PC-3 (cell line): ENCODE measurements at regions of chr3 and their contacts with region 1.

Region 1: GRCh38 chr3:57298041-57298440 is 5.6 kb upstream of the ASB14 start:
- DNase-seq: peak; percentile 88
- ATAC-seq: peak; percentile 100
- H3K4me3 ChIP-seq: no peak overlapping the region
- H3K27ac ChIP-seq: no peak overlapping the region
- H3K4me1 ChIP-seq: peaks cover 11% of the 10 kb centered on the region
- H3K27me3 ChIP-seq: no peaks in the 10 kb centered on the region
- CTCF ChIP-seq: peak; percentile 34; the same call in 1 of the 2 replicates

Region 2: DNA sequence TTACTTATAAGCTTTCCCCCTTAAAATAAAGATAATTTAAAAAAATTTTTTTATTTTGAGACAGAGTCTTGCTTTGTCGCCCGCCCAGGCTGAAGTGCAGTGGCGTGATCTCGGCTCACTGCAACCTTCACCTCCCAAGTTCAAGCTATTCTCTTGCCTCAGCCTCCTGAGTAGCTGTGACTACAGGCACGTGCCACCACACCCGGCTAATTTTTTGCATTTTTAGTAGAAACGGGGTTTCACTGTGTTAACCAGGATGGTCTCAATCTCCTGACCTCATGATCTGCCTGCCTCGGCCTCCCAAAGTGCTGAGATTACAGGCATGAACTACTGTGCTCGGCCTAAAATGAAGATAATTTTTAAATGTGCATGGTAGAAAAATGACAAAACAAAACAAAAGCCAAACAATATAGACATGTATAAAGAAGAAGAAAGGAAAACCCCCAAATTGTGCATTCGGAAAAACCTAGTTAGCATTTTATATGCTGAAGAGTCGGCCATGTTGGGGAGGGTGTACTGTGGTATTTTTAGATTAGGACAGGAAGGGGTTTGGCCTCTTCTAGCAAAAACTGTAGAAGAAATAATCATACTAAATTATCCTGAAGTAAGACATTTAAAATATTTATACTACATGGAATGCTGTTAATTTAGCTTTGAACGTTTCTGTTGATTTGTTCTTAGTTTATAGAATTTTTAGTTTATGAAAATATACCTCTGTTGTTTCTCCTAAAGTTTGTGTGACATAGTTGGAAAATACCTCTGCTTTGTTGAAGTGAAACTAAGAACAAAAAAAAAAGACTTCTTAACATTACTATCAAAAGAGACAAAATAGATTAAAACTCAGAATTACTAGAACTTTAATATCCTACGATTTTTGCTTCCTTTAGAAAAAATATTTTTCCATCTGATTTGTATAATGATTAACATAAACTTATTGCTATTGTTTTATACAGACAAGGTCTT is 63.1 kb before region 1 on chr3:
- CTCF ChIA-PET with region 1: no interaction called
- POLR2A ChIA-PET with region 1: no interaction called
- intact Hi-C with region 1: loop called (anchors 5 kb)
- DNase-seq: no peak
- ATAC-seq: no peak
- H3K4me3 ChIP-seq: no peak overlapping the region
- H3K27ac ChIP-seq: no peak overlapping the region
- H3K4me1 ChIP-seq: peaks cover 7% of the 10 kb centered on the region
- H3K27me3 ChIP-seq: no peaks in the 10 kb centered on the region
- CTCF ChIP-seq: no peak

Region 3: GRCh38 chr3:57287205-57287604 is 10.8 kb before region 1 on chr3:
- CTCF ChIA-PET with region 1: no interaction called
- POLR2A ChIA-PET with region 1: interaction called, 10 read pairs
- intact Hi-C with region 1: no loop called
- DNase-seq: no peak
- ATAC-seq: peak; percentile 22; the same call in 1 of the 2 replicates
- H3K4me3 ChIP-seq: no peak overlapping the region
- H3K27ac ChIP-seq: no peak overlapping the region
- H3K4me1 ChIP-seq: no peaks in the 10 kb centered on the region
- H3K27me3 ChIP-seq: no peaks in the 10 kb centered on the region
- CTCF ChIP-seq: no peak

Region 4: GRCh38 chr3:57331078-57331610 is 33.1 kb after region 1 on chr3:
- CTCF ChIA-PET with region 1: interaction called, 13 read pairs
- POLR2A ChIA-PET with region 1: no interaction called
- intact Hi-C with region 1: no loop called
- DNase-seq: no peak
- ATAC-seq: 0 out of 2 replicates have a peak, but pooled peaks have one; percentile 45
- H3K4me3 ChIP-seq: no peak overlapping the region
- H3K27ac ChIP-seq: no peak overlapping the region
- H3K4me1 ChIP-seq: no peaks in the 10 kb centered on the region
- H3K27me3 ChIP-seq: peaks cover 14% of the 10 kb centered on the region; the same call in 1 of the 2 replicates
- CTCF ChIP-seq: peak; percentile 33; the same call in 1 of the 2 replicates

Region 5: DNA sequence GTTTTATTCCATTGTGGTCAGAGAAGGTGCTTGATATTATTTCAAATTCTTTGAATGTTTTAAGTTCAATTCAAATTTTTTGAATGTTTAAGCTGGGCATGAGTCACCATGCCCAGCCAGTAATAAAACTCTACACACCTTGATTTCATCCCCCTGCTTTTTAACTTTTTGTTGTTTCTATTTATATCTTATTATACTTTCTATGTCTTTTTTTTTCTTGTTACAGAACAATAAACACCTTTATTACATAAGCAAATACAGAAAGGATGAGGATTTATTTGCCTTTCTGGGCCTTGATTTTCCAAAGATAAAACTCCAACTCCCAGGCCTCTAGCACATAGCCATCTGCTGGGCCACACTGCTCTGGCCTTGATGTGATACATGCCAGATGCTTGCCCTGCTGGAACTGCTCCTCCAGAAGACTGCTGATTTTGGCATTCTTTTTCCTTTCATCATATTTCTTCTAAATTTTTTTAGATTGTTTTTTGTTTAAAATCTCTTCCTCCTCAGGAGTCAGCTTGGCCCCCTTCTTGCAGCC is 232.1 kb after region 1 on chr3:
- CTCF ChIA-PET with region 1: no interaction called
- POLR2A ChIA-PET with region 1: no interaction called
- intact Hi-C with region 1: no loop called
- DNase-seq: peak; percentile 59
- ATAC-seq: peak; percentile 97
- H3K4me3 ChIP-seq: no peak overlapping the region
- H3K27ac ChIP-seq: peak overlapping the region; percentile 10; the same call in 1 of the 2 replicates
- H3K4me1 ChIP-seq: peaks cover 13% of the 10 kb centered on the region
- H3K27me3 ChIP-seq: no peaks in the 10 kb centered on the region
- CTCF ChIP-seq: no peak